ENCODE measurements at regions of chr12 and their contacts with region 1.

Region 1: GRCh38 chr12:76201758-76202157 is 117.3 kb upstream of the NAP1L1 start:
- DNase-seq: no peak
- ATAC-seq: no peak
- H3K4me3 ChIP-seq: no peak overlapping the region
- H3K4me3 Mint-ChIP-seq: no peak overlapping the region
- H3K27ac ChIP-seq: no peak overlapping the region
- H3K27ac Mint-ChIP-seq: no peak overlapping the region
- H3K4me1 ChIP-seq: no peaks in the 10 kb centered on the region
- H3K4me1 Mint-ChIP-seq: peaks cover 0 to 9% (median 4%) of the 10 kb centered on the region in 7 donors
- H3K27me3 ChIP-seq: no peaks in the 10 kb centered on the region
- H3K27me3 Mint-ChIP-seq: peaks cover 2 to 38% (median 15%) of the 10 kb centered on the region in 5 donors

Region 2: GRCh38 chr12:76180401-76181277 is 21.1 kb before region 1 on chr12:
- CTCF ChIA-PET with region 1: no interaction called
- POLR2A ChIA-PET with region 1: no interaction called
- intact Hi-C with region 1: loop called in 1 of 2 experiments (anchors 1 kb)
- DNase-seq: no peak
- ATAC-seq: no peak
- H3K4me3 ChIP-seq: no peak overlapping the region
- H3K4me3 Mint-ChIP-seq: no peak overlapping the region
- H3K27ac ChIP-seq: no peak overlapping the region
- H3K27ac Mint-ChIP-seq: no peak overlapping the region
- H3K4me1 ChIP-seq: no peaks in the 10 kb centered on the region
- H3K4me1 Mint-ChIP-seq: peaks cover 0 to 5% (median 0%) of the 10 kb centered on the region in 7 donors
- H3K27me3 ChIP-seq: no peaks in the 10 kb centered on the region
- H3K27me3 Mint-ChIP-seq: peaks cover 0 to 18% (median 5%) of the 10 kb centered on the region in 5 donors

Measured in naive thymus-derived CD4-positive, alpha-beta T cell (primary cell).